MCF 10A (cell line): ENCODE measurements at regions of chr1 and their contacts with region 1.

Region 1: DNA sequence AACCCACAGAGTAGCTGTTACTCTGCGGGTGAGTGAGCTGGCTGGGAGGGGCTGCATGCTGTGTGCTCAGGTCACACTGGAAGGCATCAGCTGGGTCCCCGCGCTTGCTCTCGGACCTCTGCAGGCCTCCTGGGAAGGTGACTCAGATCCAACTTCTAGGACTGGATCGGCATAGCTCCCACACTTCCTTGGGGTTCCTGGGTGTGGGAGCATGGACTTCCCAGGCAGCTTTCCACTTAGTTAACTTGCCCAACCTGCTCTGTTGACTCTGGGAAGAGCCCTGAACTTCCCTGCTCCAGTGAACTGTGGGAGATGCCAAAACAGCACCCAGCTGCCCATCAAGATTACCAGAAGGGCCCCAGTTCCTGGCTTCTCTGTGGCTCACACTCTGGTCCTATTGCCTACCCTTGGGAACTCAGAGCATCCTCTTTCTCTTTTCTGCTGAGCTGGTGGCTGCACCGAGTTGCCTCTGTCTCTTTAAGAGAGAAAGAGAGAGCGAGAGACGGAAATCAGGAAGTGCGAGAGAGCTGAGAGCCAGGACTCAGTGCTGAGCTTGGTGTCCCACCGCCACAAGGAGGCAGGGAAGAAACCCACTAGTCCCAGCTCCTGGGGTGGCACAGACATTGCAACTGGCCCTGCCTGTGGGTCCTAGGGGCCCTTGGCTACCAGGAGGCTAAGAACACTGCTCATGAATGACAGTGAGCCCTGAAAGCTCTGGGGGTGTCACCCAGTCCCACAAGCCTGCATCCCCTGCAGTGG is at the start of gene IKBKE:
- DNase-seq: peak; percentile 85
- H3K4me3 Mint-ChIP-seq: peak within 1 kb of the TSS; percentile 75
- H3K27ac Mint-ChIP-seq: peak within 1 kb of the TSS; percentile 61
- H3K4me1 Mint-ChIP-seq: peaks cover 43% of the 10 kb centered on the region
- H3K27me3 Mint-ChIP-seq: peaks cover 13% of the 10 kb centered on the region
- CTCF ChIP-seq: no peak
- total RNA-seq, gene IKBKE: 7.1 and 12.1 TPM in 2 replicates

Region 2: GRCh38 chr1:206453121-206453520 is 17.0 kb before region 1 on chr1:
- CTCF ChIA-PET with region 1: interaction called, 254 read pairs
- POLR2A ChIA-PET with region 1: interaction called, 10 read pairs
- intact Hi-C with region 1: no loop called
- DNase-seq: no peak
- H3K4me3 Mint-ChIP-seq: no peak overlapping the region
- H3K27ac Mint-ChIP-seq: no peak overlapping the region
- H3K4me1 Mint-ChIP-seq: peaks cover 14% of the 10 kb centered on the region
- H3K27me3 Mint-ChIP-seq: no peaks in the 10 kb centered on the region
- CTCF ChIP-seq: no peak